ENCODE measurements at regions of chr1 and their contacts with region 1.

Region 1: GRCh38 chr1:31789259-31790065 is 25.3 kb upstream of the ADGRB2 start:
- DNase-seq: peak; percentile 93
- ATAC-seq: peak; percentile 76
- H3K4me3 ChIP-seq: peak overlapping the region in 4 of 5 experiments; percentile 61 to 91 (median 76)
- H3K4me3 Mint-ChIP-seq: peak overlapping the region; percentile 96
- H3K27ac ChIP-seq: peak overlapping the region; percentile 73 to 88
- H3K27ac Mint-ChIP-seq: peak overlapping the region; percentile 98
- H3K4me1 ChIP-seq: peaks cover 26 to 34% of the 10 kb centered on the region in 2 donors
- H3K4me1 Mint-ChIP-seq: peaks cover 35% of the 10 kb centered on the region
- H3K27me3 ChIP-seq: peaks cover 0 to 3% (median 0%) of the 10 kb centered on the region in 4 experiments
- H3K27me3 Mint-ChIP-seq: peaks cover 3% of the 10 kb centered on the region
- CTCF ChIP-seq: peak; percentile 79

Region 2: DNA sequence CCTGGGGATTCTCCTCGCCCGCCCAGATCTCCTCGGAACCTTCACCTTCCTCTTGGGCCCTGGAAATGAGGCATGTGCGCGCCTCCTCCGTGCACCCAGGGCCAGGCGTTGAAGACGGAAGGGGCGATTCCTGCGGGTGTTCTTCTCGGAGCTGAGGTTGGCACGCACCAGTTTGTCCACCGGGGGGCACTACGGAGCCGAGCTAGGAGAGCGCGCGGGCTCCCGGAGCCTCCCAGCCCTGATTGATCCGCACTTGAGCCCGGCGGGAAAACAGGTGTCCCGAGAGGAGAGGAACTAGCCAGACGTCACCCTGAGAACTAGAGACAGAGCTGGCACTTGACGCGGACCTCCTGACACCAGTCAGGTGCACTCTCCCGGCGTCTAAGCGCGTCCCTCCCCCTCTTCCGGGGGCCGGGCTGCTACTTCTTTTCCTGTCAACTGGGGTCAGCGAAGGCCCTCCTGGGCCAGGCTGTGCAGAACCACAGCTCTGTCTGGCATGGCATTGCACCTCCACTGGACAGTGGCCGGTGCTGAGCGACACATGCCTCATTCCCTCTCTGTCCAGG is 394.8 kb before region 1 on chr1:
- CTCF ChIA-PET with region 1: interaction called, 27 read pairs
- POLR2A ChIA-PET with region 1: no interaction called
- intact Hi-C with region 1: no loop called
- DNase-seq: peak; percentile 87
- ATAC-seq: peak; percentile 93
- H3K4me3 ChIP-seq: peak overlapping the region; percentile 27 to 71 (median 55)
- H3K4me3 Mint-ChIP-seq: peak overlapping the region; percentile 87
- H3K27ac ChIP-seq: no peak overlapping the region
- H3K27ac Mint-ChIP-seq: peak overlapping the region; percentile 26
- H3K4me1 ChIP-seq: peaks cover 8 to 13% of the 10 kb centered on the region in 2 donors
- H3K4me1 Mint-ChIP-seq: peaks cover 13% of the 10 kb centered on the region
- H3K27me3 ChIP-seq: no peaks in the 10 kb centered on the region
- H3K27me3 Mint-ChIP-seq: no peaks in the 10 kb centered on the region
- CTCF ChIP-seq: peak; percentile 91

Region 3: GRCh38 chr1:31644560-31645273 is 144.7 kb before region 1 on chr1 and contains the start of gene PEF1:
- CTCF ChIA-PET with region 1: interaction called, 16 read pairs
- POLR2A ChIA-PET with region 1: interaction called, 9 read pairs
- intact Hi-C with region 1: loop called (anchors 1 kb)
- DNase-seq: peak; percentile 100
- ATAC-seq: peak; percentile 93
- H3K4me3 ChIP-seq: peak within 1 kb of the TSS; percentile 70 to 98 (median 95)
- H3K4me3 Mint-ChIP-seq: peak within 1 kb of the TSS; percentile 98
- H3K27ac ChIP-seq: peak within 1 kb of the TSS; percentile 98 to 99
- H3K27ac Mint-ChIP-seq: peak within 1 kb of the TSS; percentile 99
- H3K4me1 ChIP-seq: peaks cover 17 to 19% of the 10 kb centered on the region in 2 donors
- H3K4me1 Mint-ChIP-seq: peaks cover 31% of the 10 kb centered on the region
- H3K27me3 ChIP-seq: no peaks in the 10 kb centered on the region
- H3K27me3 Mint-ChIP-seq: no peaks in the 10 kb centered on the region
- CTCF ChIP-seq: no peak
- total RNA-seq, gene PEF1: 36.7 and 46.9 TPM in 2 replicates

Region 4: GRCh38 chr1:31745096-31745945 is 44.1 kb before region 1 on chr1:
- CTCF ChIA-PET with region 1: interaction called, 15 read pairs
- POLR2A ChIA-PET with region 1: no interaction called
- intact Hi-C with region 1: no loop called
- DNase-seq: peak; percentile 39
- ATAC-seq: peak; percentile 34
- H3K4me3 ChIP-seq: no peak overlapping the region
- H3K4me3 Mint-ChIP-seq: no peak overlapping the region
- H3K27ac ChIP-seq: peak overlapping the region; percentile 28 to 29
- H3K27ac Mint-ChIP-seq: peak overlapping the region; percentile 87
- H3K4me1 ChIP-seq: peaks cover 23 to 36% of the 10 kb centered on the region in 2 donors
- H3K4me1 Mint-ChIP-seq: peaks cover 45% of the 10 kb centered on the region
- H3K27me3 ChIP-seq: peaks cover 0 to 8% (median 2%) of the 10 kb centered on the region in 4 experiments
- H3K27me3 Mint-ChIP-seq: peaks cover 3% of the 10 kb centered on the region
- CTCF ChIP-seq: peak; percentile 44

Region 5: GRCh38 chr1:31815752-31816500 is 26.5 kb after region 1 on chr1 and contains the start of gene SPOCD1:
- CTCF ChIA-PET with region 1: interaction called, 10 read pairs
- POLR2A ChIA-PET with region 1: no interaction called
- intact Hi-C with region 1: no loop called
- DNase-seq: peak; percentile 75
- ATAC-seq: peak; percentile 68
- H3K4me3 ChIP-seq: peak within 1 kb of the TSS in 1 of 5 experiments; percentile 25
- H3K4me3 Mint-ChIP-seq: no peak within 1 kb of the TSS
- H3K27ac ChIP-seq: peak within 1 kb of the TSS in 1 of 2 donors; percentile 4
- H3K27ac Mint-ChIP-seq: peak within 1 kb of the TSS; percentile 41
- H3K4me1 ChIP-seq: peaks cover 10 to 18% of the 10 kb centered on the region in 2 donors
- H3K4me1 Mint-ChIP-seq: peaks cover 24% of the 10 kb centered on the region
- H3K27me3 ChIP-seq: no peaks in the 10 kb centered on the region
- H3K27me3 Mint-ChIP-seq: no peaks in the 10 kb centered on the region
- CTCF ChIP-seq: peak; percentile 64
- total RNA-seq, gene SPOCD1: not detected in 2 replicates

Region 6: DNA sequence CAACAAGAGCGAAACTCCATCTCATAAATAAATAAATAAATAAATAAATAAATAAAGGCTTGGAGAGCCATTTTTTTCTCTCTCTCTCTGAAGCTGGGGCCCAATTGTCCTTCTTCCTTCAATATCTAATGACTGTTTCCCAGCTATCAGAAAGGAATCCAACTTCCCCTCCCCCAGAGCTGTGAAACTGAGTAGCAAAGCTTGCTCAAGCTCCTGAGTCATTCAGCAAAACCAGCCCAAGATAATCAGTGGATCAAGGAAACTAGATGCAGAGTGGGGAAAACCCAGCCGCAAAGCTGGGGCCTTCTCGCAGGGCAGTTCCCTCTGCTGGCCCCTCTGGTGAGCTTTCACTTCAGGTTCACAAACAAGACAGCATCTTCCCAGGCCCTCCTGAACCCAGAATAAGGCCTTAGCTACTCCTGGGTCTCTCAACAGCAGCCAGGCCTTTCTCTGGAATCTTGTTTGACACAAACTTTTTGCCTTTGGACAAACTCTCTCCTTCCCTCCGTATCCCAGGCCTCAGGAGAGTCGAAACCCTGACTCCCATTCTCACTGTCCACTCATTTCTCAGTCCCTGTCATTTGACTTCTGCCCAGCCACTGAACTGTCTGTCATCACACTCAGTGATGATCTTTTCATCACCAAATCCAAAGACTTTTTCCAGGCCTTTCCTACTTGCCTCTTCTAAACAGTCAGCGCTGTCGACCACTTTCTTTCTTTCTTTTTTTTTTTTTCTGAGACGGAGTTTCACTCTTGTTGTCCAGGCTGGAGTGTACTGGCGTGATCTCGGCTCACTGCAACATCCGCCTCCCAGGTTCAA is 166.7 kb after region 1 on chr1:
- CTCF ChIA-PET with region 1: interaction called, 89 read pairs
- POLR2A ChIA-PET with region 1: no interaction called
- intact Hi-C with region 1: no loop called
- DNase-seq: peak; percentile 85
- ATAC-seq: peak; percentile 96
- H3K4me3 ChIP-seq: no peak overlapping the region
- H3K4me3 Mint-ChIP-seq: peak overlapping the region; percentile 51
- H3K27ac ChIP-seq: peak overlapping the region; percentile 65 to 82
- H3K27ac Mint-ChIP-seq: peak overlapping the region; percentile 77
- H3K4me1 ChIP-seq: peaks cover 26 to 36% of the 10 kb centered on the region in 2 donors
- H3K4me1 Mint-ChIP-seq: peaks cover 28% of the 10 kb centered on the region
- H3K27me3 ChIP-seq: no peaks in the 10 kb centered on the region
- H3K27me3 Mint-ChIP-seq: no peaks in the 10 kb centered on the region
- CTCF ChIP-seq: peak; percentile 33

Region 7: GRCh38 chr1:32255072-32256071 is 465.9 kb after region 1 on chr1:
- CTCF ChIA-PET with region 1: no interaction called
- POLR2A ChIA-PET with region 1: no interaction called
- intact Hi-C with region 1: no loop called
- DNase-seq: no peak
- ATAC-seq: no peak
- H3K4me3 ChIP-seq: no peak overlapping the region
- H3K4me3 Mint-ChIP-seq: peak overlapping the region; percentile 68
- H3K27ac ChIP-seq: peak overlapping the region in 1 of 2 donors; percentile 50
- H3K27ac Mint-ChIP-seq: peak overlapping the region; percentile 88
- H3K4me1 ChIP-seq: peaks cover 61 to 70% of the 10 kb centered on the region in 2 donors
- H3K4me1 Mint-ChIP-seq: peaks cover 60% of the 10 kb centered on the region
- H3K27me3 ChIP-seq: no peaks in the 10 kb centered on the region
- H3K27me3 Mint-ChIP-seq: no peaks in the 10 kb centered on the region
- CTCF ChIP-seq: no peak